G401 (cell line): ENCODE measurements at regions of chr11 and their contacts with region 1.

Region 1: GRCh38 chr11:9838961-9839360 is 175.1 kb downstream of the SWAP70 start:
- DNase-seq: no peak

Region 2: DNA sequence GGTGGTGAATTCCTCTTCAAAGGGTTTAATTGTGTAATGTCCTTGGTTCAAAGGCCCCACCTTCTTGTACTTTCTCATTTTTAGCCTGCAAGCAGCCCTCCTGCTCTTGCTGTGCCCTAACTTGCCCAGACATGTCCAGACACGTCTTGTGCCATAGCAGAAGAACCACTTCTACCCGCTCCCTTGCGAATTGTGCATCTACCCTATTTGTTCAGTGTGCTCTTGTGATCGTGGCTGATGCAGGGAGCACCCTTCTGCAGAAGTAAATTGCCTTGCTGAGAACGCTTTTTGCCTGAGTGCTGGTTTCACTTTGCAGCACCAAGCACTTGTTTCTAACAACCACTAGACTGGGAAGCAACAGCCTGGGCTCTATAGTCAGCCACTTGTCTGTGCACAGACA is 205.7 kb after region 1 on chr11:
- in situ Hi-C with region 1: no loop called
- DNase-seq: no peak

Region 3: DNA sequence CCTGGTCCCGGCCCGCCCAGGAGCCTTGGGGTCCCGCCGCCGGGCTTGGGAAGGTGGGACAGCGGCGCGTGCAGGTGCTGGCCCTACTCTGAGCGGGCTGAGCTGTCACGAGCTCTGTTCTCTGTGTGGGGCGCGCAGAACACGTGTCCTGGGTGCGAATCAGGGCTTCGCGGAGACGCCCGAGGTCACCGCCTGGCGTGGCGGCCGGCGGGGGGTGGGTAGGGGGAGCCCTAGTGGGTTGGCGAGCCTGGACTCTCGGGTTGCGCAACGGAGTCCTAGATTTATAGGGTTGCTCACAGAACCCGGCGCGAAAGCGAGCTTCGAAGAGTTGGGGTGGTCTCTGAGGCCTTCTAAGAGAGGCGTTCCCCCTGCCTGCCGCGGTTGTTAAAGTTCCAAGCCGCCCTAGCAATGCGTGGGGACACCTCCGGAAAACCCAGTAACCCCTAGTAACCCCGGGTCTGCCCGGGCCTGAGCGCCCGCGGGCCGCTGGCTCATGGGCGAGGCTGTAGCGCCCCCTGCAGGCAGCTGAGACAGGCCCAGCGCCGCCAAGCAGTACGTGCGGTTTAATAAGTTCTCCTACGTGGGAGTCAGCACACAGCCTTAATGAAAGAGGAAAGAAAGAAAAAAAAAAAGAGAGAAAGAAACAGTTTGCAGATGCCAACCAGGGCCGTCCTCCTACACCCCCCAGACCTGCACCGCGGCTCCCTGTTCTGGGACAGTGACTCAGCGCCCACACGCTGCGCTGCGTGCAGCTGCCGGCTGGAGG is 468.7 kb after region 1 on chr11:
- in situ Hi-C with region 1: loop called (anchors 25 kb)
- DNase-seq: peak; percentile 67